Cardiac septum (tissue), 1 donor: ENCODE measurements at regions of chr14 and their contacts with region 1.

Region 1: DNA sequence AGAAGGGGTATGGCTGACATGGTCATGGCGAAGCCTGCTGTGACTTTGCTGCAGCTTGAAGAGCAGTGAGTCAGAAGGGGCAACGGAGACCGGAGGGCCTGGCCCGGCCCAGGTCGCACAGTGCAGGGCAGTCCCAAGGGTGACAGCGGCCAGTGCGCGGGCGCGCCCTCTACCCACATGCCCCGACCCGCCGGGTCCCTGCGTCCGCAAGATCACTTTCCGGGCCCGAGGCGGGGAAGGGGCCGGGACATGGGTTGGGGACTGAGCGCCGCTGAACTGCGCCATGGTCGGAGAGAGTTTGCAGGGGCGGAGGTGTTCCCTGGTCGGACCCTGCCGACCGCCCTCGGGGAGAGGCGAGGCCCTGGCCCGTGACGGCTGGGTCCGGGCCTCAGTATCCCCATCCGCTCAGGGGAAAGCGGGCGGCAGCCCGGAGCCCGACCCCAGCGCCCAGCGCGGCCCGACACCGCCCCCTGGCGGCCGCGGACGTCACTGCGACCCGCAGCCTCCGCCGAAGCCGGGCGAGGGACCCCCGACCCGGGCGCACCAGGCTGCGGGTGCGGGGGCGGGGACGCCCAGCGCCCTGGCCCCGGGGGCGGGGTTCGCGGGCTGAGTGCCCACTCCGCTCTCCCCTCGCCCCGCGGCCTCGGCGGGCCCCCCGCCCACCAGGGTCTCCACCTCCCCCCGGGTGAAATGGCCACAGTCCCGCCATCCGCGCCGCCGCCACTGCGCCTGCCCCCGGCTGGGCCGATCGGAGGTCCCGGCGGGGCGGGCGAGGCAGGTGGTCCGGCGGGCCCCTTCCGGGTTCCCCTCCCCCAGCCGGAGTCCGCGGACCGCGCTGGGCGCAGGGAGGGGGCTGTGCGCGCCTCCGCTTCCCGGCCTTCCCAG is 7.2 kb upstream of the ANKRD9 start:
- DNase-seq: no peak

Region 2: GRCh38 chr14:102437997-102438915 is 78.5 kb before region 1 on chr14:
- intact Hi-C with region 1: loop called (anchors 1 kb)
- DNase-seq: peak; percentile 91